AG04450 (cell line): ENCODE measurements at regions of chr14 and their contacts with region 1.

Region 1: DNA sequence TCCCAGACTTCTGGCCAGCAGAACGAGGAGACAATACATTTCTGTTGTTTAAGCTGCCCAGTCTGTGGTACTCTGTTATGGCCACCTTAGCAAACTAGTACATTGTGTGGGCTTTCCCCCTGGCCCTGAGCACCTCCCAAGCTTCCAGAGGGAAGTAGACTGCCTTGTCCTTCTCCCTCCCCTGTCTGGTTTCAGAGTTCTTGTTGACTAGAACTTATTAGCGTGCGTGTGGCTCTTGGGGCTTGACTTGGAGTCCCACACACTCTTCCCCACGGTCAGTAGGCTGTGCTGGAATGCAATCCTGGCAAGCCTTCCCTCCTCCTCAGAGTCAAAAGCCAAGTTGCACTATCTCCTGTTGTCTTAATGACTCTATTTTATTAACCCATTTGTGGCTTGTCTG is 27.7 kb downstream of the FBLN5 start:
- DNase-seq: no peak
- H3K4me3 ChIP-seq: no peak overlapping the region
- H3K27ac ChIP-seq: peak overlapping the region; percentile 31
- H3K27me3 ChIP-seq: no peaks in the 10 kb centered on the region
- CTCF ChIP-seq: no peak

Region 2: GRCh38 chr14:91614187-91614586 is 305.6 kb before region 1 on chr14:
- CTCF ChIA-PET with region 1: interaction called, 14 read pairs
- POLR2A ChIA-PET with region 1: no interaction called
- DNase-seq: no peak
- H3K4me3 ChIP-seq: no peak overlapping the region
- H3K27ac ChIP-seq: no peak overlapping the region
- H3K27me3 ChIP-seq: no peaks in the 10 kb centered on the region
- CTCF ChIP-seq: no peak

Region 3: GRCh38 chr14:91883753-91884152 is 36.1 kb before region 1 on chr14:
- CTCF ChIA-PET with region 1: no interaction called
- POLR2A ChIA-PET with region 1: no interaction called
- DNase-seq: no peak
- H3K4me3 ChIP-seq: no peak overlapping the region
- H3K27ac ChIP-seq: no peak overlapping the region
- H3K27me3 ChIP-seq: no peaks in the 10 kb centered on the region
- CTCF ChIP-seq: no peak

Region 4: GRCh38 chr14:91953170-91953985 is 33.6 kb after region 1 on chr14:
- CTCF ChIA-PET with region 1: no interaction called
- POLR2A ChIA-PET with region 1: no interaction called
- DNase-seq: no peak
- H3K4me3 ChIP-seq: no peak overlapping the region
- H3K27ac ChIP-seq: no peak overlapping the region
- H3K27me3 ChIP-seq: peaks cover 5% of the 10 kb centered on the region
- CTCF ChIP-seq: no peak